ENCODE measurements at regions of chr11 and their contacts with region 1.

Region 1: DNA sequence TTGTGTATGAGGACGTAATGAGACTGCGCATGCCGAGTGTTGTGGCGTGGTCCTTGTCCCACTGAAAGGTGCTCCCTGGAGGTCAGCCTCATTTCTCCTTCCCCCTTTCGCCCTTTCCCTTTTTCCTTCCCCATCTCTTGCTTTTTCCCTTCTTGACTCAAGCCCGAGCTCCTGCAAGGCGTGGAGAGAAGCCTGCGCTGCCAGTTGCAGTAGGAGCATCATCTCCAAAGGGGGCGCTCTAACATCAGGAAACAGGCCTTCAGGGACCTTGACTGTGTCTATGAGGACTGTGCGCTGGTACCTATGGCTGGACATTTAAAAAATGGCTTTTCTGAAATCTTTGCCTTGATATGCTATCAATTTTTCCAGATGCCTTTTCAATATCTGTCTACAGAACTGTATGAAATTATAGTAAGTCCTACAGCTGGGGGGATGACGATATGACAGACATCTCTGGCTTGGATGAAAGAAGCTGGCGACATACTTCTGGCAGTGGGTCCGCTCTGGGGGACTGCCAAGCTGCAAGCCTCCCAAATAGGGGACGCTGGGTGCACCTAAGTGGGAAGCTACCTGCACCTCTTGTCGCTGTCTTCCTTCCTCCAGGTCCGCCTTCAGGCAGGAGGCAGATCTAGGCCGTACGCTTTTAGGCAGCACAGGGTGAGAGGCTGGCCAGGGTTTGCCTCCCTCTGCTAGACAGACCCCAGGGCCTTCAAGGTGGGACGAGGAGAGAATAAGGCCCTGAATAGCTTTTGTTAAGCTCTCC is 96.5 kb downstream of the NXPE2 start:
- DNase-seq: peak in 1 of 2 donors; percentile 46
- ATAC-seq: peak; percentile 34 to 88 (median 78)
- H3K4me3 ChIP-seq: no peak overlapping the region
- H3K27ac ChIP-seq: no peak overlapping the region
- H3K4me1 ChIP-seq: peaks cover 0 to 14% (median 7%) of the 10 kb centered on the region in 9 donors
- H3K27me3 ChIP-seq: peaks cover 0 to 13% (median 0%) of the 10 kb centered on the region in 7 donors
- CTCF ChIP-seq: peak; percentile 20 to 71 (median 67)

Region 2: DNA sequence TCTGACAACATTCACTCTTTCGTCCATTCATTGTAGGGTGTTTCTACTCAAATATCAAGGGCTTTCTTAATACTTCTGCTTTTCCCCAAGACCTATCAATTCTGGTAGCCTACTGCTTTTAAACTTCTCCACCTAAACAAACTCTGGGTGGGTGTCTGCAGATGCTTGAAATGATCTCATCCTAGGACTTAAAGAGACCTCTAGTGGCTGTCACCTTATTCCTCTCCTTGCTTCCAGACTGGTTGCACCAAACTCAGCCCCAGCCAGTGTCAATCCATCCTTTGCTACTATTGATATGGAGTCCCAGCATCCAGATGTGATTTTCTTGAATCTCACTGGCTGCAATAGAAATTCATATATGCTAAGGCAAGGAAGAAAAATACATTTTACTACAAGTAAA is 178.3 kb after region 1 on chr11:
- intact Hi-C with region 1: loop called in 9 of 10 experiments (anchors 2 to 10 kb)
- DNase-seq: no peak
- ATAC-seq: peak in 3 of 8 donors; percentile 55 to 56 (median 55)
- H3K4me3 ChIP-seq: no peak overlapping the region
- H3K27ac ChIP-seq: no peak overlapping the region
- H3K4me1 ChIP-seq: no peaks in the 10 kb centered on the region
- H3K27me3 ChIP-seq: no peaks in the 10 kb centered on the region
- CTCF ChIP-seq: peak in 6 of 9 donors; percentile 23 to 56 (median 46)

Region 3: DNA sequence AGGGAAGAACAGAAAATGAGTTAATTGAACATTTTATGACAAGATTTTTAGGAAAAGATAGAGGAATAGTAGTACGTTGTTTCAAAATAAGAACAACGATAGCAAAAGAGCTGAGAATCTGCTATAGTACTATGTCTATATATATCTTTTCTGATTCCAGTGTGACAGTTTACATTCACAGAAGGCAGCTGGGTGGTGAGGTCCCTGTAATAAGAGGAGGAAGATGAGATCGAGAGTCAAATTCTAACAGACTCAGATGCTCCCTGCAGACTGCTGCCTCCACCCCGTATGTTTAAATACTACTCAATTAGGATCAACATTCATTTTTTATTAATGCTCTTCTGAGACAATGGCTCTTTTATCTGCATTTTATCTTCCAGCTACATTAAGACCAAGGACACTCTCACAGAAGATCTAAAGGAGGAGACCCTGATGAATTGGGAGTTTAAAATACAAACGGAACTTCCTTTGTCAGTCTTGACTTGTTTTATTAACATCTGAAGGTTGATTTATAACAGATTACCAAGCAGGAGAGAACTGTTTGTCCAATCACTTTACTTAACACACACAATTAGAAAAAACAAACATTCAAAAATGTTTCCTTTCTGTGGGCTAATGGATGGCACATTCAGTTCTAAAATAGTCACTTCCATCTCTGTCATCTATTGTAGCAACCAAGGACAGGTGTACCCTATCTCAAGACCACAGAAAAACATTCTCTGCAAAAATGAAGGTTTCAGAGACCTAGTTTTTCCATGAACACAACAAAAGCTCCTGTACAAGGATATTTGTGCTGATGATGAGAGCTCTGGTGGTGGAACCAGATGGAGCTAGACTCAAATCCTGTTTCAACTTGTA is 489.2 kb after region 1 on chr11:
- intact Hi-C with region 1: no loop called
- DNase-seq: no peak
- ATAC-seq: no peak
- H3K4me3 ChIP-seq: no peak overlapping the region
- H3K27ac ChIP-seq: no peak overlapping the region
- H3K4me1 ChIP-seq: peaks cover 0 to 29% (median 3%) of the 10 kb centered on the region in 9 donors
- H3K27me3 ChIP-seq: no peaks in the 10 kb centered on the region
- CTCF ChIP-seq: no peak

Measured in heart right ventricle (tissue), 16 donors.